ENCODE measurements at regions of chr13 and their contacts with region 1.

Region 1: GRCh38 chr13:91955546-91956355 is 557.3 kb downstream of the GPC5 start:
- DNase-seq: no peak
- ATAC-seq: peak; percentile 37; the same call in 2 of the 3 replicates
- H3K4me3 ChIP-seq: no peak overlapping the region
- H3K27ac ChIP-seq: no peak overlapping the region
- H3K4me1 ChIP-seq: no peaks in the 10 kb centered on the region
- H3K27me3 ChIP-seq: no peaks in the 10 kb centered on the region
- CTCF ChIP-seq: no peak
- EP300 ChIP-seq: no peak
- POLR2A ChIP-seq: no peak
- RAD21 ChIP-seq: no peak

Region 2: GRCh38 chr13:92012787-92013186 is 57.0 kb after region 1 on chr13:
- CTCF ChIA-PET with region 1: no interaction called
- POLR2A ChIA-PET with region 1: no interaction called
- in situ Hi-C with region 1: no loop called
- intact Hi-C with region 1: no loop called
- DNase-seq: no peak
- ATAC-seq: no peak
- H3K4me3 ChIP-seq: no peak overlapping the region
- H3K27ac ChIP-seq: no peak overlapping the region
- H3K4me1 ChIP-seq: no peaks in the 10 kb centered on the region
- H3K27me3 ChIP-seq: no peaks in the 10 kb centered on the region
- CTCF ChIP-seq: no peak
- EP300 ChIP-seq: no peak
- POLR2A ChIP-seq: no peak
- RAD21 ChIP-seq: no peak

Region 3: DNA sequence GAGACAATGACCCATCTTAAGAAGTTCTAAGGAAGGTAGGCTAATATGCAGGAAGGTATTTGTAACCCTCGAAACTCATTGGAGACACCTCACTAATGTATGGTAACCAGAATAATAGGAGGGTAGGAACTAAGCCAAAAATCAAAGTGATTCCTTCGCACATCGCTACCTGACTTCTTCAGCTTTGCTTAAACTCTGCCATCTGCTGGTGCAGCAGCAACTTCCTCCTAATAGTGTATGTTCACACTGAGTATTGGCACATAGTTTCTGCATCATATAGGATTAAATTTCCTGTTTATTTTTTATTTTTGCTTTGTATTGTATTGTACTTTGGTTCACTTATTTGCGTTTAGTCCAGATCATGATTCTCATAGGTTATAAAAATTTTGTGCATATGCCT is 118.9 kb after region 1 on chr13:
- CTCF ChIA-PET with region 1: no interaction called
- POLR2A ChIA-PET with region 1: no interaction called
- in situ Hi-C with region 1: loop called (anchors 10 kb)
- intact Hi-C with region 1: no loop called
- DNase-seq: peak; percentile 28
- ATAC-seq: peak; percentile 82
- H3K4me3 ChIP-seq: no peak overlapping the region
- H3K27ac ChIP-seq: no peak overlapping the region
- H3K4me1 ChIP-seq: no peaks in the 10 kb centered on the region
- H3K27me3 ChIP-seq: no peaks in the 10 kb centered on the region; a peak in 1 of 5 replicates
- CTCF ChIP-seq: peak; percentile 55
- EP300 ChIP-seq: no peak
- POLR2A ChIP-seq: no peak
- RAD21 ChIP-seq: no peak; the same call in 1 of the 2 replicates

Measured in HepG2 (cell line).